Activated T-helper 2 cell treated with anti-CD3 and anti-CD28 coated beads, Interferon-gamma antibody, Interleukin-2, Interleukin-4, amounts not matched to agents 10 μg/mL and 5 μg/mL and 100 μg/mL, durations not matched to agents 14 hours and 24 hours and 36 hours (primary cell): ENCODE measurements at regions of chr6 and their contacts with region 1.

Region 1: DNA sequence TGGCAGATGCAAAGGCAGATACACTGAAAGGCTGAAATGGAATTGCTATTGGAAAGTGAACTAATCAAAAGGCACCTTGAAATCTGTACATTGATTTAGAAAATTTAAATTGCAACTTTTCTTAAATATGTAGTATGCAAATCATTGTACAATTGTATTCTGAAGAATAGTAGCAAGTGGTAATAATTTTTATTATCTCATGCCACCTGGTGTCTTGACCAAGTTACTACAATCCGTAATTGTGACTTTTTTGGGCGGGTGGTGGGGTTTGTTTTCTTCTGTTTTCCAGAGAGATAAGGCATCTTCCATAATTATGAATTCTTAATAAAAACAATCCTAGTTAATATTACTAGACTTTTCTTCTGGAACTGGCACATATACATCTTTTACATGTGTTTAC is 12.5 kb upstream of the BCKDHB start:
- DNase-seq: no peak
- H3K4me3 Mint-ChIP-seq: no peak overlapping the region
- H3K27ac Mint-ChIP-seq: no peak overlapping the region
- H3K4me1 Mint-ChIP-seq: peaks cover 6% of the 10 kb centered on the region
- H3K27me3 Mint-ChIP-seq: peaks cover 21% of the 10 kb centered on the region

Region 2: DNA sequence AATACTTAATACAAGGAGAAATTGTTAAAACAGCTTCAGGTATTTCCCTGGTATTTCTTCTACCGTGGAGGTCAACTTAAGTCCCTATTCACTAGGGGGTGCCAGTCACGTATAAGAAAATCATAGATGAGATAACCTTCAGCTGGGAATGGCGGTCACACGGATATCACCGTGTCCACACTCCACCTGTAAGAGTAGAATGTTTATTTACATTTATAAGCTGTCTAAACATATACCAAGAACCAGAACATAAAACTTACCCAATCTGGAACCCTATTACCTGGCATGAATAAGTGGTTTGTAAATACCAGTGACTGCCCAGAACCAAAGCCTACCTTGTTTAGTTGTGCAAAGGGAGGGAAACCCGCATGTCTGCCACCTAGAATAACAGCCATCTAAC is 144.8 kb before region 1 on chr6:
- intact Hi-C with region 1: loop called (anchors 1 kb)
- DNase-seq: peak; percentile 29
- H3K4me3 Mint-ChIP-seq: no peak overlapping the region
- H3K27ac Mint-ChIP-seq: no peak overlapping the region
- H3K4me1 Mint-ChIP-seq: peaks cover 20% of the 10 kb centered on the region
- H3K27me3 Mint-ChIP-seq: peaks cover 43% of the 10 kb centered on the region

Region 3: GRCh38 chr6:80151635-80152034 is 57.6 kb after region 1 on chr6:
- intact Hi-C with region 1: no loop called
- DNase-seq: no peak
- H3K4me3 Mint-ChIP-seq: no peak overlapping the region
- H3K27ac Mint-ChIP-seq: no peak overlapping the region
- H3K4me1 Mint-ChIP-seq: no peaks in the 10 kb centered on the region
- H3K27me3 Mint-ChIP-seq: no peaks in the 10 kb centered on the region

Region 4: DNA sequence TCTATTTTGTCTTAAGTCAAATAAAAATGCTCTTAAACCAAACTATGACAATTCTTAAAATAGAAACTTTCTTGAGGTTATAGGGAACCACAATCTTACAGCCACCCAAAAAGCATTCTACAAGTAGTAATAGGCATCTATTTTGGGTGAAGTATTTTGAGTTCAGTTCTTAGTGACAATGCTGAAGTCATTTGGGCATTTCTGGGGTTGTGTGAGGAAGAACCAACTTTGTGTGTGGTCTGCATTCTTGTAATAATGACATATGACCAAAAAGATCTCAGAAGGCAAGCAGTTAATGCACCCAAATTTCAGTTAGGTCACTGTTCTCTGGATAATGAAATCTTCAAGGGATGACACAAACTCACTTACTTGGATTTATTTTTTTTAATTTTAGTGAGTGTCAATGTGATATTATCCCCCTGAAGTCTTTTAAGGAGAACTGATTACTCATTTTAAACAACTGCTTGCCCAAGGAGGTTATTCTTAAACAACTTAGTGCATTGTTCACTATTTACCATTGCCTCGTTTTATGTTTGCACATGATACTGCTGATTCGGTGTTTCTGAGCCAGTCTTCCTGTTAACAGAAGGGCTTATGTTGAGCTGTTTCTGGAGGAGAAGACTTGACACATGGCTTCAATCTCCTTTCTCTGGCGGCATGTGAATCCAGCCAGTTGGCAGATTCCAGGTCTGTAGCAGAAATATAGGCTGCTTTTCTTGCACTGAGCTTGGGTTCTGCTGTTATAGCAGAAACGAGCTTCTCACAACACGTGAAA is 631.3 kb after region 1 on chr6:
- intact Hi-C with region 1: no loop called
- DNase-seq: no peak
- H3K4me3 Mint-ChIP-seq: no peak overlapping the region
- H3K27ac Mint-ChIP-seq: no peak overlapping the region
- H3K4me1 Mint-ChIP-seq: no peaks in the 10 kb centered on the region
- H3K27me3 Mint-ChIP-seq: no peaks in the 10 kb centered on the region